PC-3 (cell line): ENCODE measurements at regions of chr12 and their contacts with region 1.

Region 1: GRCh38 chr12:120649442-120650232 is 9.2 kb downstream of the CABP1 start:
- DNase-seq: no peak
- ATAC-seq: no peak
- H3K4me3 ChIP-seq: peak overlapping the region; percentile 64; the same call in 1 of the 2 replicates
- H3K27ac ChIP-seq: no peak overlapping the region
- H3K4me1 ChIP-seq: peaks cover 5% of the 10 kb centered on the region
- H3K27me3 ChIP-seq: no peaks in the 10 kb centered on the region
- CTCF ChIP-seq: peak; percentile 38; the same call in 1 of the 2 replicates

Region 2: DNA sequence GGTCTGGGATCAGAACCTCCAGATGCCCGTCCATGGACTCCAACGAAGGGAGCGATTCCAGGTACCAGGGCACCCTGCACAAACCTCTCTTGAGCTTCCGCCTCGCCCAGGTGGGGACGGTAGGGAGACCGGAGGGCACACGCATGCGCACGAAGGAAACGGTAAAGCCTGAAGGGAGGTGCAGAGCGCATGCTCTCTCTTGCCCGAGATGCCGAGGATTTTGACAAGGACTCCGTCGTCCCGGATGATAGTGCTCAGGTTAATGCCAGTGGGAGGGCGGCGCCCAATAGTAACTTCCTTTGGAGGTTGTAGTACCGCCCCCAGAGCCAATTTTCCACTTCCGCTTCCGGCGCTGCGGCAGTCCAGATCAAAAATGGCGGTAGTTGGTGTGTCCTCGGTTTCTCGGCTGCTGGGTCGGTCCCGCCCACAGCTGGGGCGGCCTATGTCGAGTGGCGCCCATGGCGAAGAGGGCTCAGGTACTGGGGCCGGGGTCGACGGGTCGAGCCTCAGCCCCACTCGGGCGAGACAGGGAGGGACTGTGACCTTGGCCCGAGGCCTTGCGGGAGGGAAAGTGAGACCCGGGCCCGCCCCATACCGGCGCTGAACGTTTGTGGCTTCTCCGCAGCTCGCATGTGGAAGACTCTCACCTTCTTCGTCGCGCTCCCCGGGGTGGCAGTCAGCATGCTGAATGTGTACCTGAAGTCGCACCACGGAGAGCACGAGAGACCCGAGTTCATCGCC is 211.7 kb before region 1 on chr12 and contains the start of gene COX6A1:
- CTCF ChIA-PET with region 1: no interaction called
- POLR2A ChIA-PET with region 1: no interaction called
- intact Hi-C with region 1: loop called (anchors 1 kb)
- DNase-seq: peak; percentile 100
- ATAC-seq: peak; percentile 98
- H3K4me3 ChIP-seq: peak within 1 kb of the TSS; percentile 83
- H3K27ac ChIP-seq: peak within 1 kb of the TSS; percentile 31
- H3K4me1 ChIP-seq: peaks cover 15% of the 10 kb centered on the region
- H3K27me3 ChIP-seq: no peaks in the 10 kb centered on the region
- CTCF ChIP-seq: no peak
- total RNA-seq, gene COX6A1: 1,664 and 2,042 TPM in 2 replicates

Region 3: GRCh38 chr12:120686690-120687577 is 37.3 kb after region 1 on chr12 and contains the start of gene MLEC:
- CTCF ChIA-PET with region 1: interaction called, 6 read pairs
- POLR2A ChIA-PET with region 1: interaction called, 5 read pairs
- intact Hi-C with region 1: loop called (anchors 1 kb)
- DNase-seq: peak; percentile 98
- ATAC-seq: peak; percentile 76
- H3K4me3 ChIP-seq: peak within 1 kb of the TSS; percentile 96
- H3K27ac ChIP-seq: peak within 1 kb of the TSS; percentile 93
- H3K4me1 ChIP-seq: peaks cover 34% of the 10 kb centered on the region
- H3K27me3 ChIP-seq: no peaks in the 10 kb centered on the region
- CTCF ChIP-seq: peak; percentile 18; the same call in 1 of the 2 replicates
- total RNA-seq, gene MLEC: 158 and 166 TPM in 2 replicates